ENCODE measurements at regions of chr13 and their contacts with region 1.

Region 1: GRCh38 chr13:51844862-51845573 is at the start of gene TMEM272:
- DNase-seq: peak; percentile 63
- H3K4me3 Mint-ChIP-seq: peak within 1 kb of the TSS; percentile 47
- H3K27ac Mint-ChIP-seq: no peak within 1 kb of the TSS
- H3K4me1 Mint-ChIP-seq: peaks cover 17% of the 10 kb centered on the region
- H3K27me3 Mint-ChIP-seq: peaks cover 6% of the 10 kb centered on the region
- total RNA-seq, gene TMEM272: 0.41 to 0.42 TPM

Region 2: GRCh38 chr13:51502153-51502651 is 342.8 kb before region 1 on chr13:
- CTCF ChIA-PET with region 1: no interaction called
- intact Hi-C with region 1: no loop called
- DNase-seq: peak; percentile 66
- H3K4me3 Mint-ChIP-seq: no peak overlapping the region
- H3K27ac Mint-ChIP-seq: no peak overlapping the region
- H3K4me1 Mint-ChIP-seq: peaks cover 23% of the 10 kb centered on the region
- H3K27me3 Mint-ChIP-seq: no peaks in the 10 kb centered on the region

Region 3: DNA sequence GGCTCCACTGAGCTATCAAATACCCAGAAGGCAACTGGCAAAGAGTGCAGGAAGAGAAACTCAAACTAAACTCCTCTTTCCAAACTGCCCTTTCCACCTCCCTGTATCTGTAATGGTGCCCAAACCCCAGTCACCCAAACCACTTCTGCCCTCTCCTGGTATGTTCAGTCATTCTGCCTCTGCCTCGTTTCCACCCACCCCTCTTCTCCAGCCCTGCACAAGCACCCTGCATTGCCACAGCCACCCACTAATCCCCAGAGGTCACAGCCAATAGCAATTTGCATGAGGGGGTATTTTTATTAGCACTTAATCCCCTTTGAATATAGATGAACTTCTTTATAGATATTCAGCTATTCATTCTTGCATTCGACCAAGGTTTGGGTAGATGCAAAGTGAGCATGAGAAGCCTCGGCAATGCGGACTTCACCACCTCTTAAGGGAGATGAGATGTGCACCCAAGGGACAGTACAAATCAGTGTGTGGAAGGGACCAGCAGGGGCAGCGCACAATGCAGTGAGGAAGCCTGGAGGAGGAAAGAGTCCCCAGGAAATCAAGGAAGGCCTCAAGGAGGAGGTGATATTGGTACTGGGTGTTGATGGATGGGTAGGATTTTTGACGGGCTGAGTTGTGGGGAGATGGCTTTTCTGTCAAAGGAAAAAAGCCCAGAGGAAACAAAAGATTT is 12.4 kb before region 1 on chr13:
- CTCF ChIA-PET with region 1: interaction called, 12 read pairs
- intact Hi-C with region 1: no loop called
- DNase-seq: peak; percentile 79
- H3K4me3 Mint-ChIP-seq: no peak overlapping the region
- H3K27ac Mint-ChIP-seq: peak overlapping the region; percentile 57
- H3K4me1 Mint-ChIP-seq: peaks cover 44% of the 10 kb centered on the region
- H3K27me3 Mint-ChIP-seq: no peaks in the 10 kb centered on the region

Region 4: DNA sequence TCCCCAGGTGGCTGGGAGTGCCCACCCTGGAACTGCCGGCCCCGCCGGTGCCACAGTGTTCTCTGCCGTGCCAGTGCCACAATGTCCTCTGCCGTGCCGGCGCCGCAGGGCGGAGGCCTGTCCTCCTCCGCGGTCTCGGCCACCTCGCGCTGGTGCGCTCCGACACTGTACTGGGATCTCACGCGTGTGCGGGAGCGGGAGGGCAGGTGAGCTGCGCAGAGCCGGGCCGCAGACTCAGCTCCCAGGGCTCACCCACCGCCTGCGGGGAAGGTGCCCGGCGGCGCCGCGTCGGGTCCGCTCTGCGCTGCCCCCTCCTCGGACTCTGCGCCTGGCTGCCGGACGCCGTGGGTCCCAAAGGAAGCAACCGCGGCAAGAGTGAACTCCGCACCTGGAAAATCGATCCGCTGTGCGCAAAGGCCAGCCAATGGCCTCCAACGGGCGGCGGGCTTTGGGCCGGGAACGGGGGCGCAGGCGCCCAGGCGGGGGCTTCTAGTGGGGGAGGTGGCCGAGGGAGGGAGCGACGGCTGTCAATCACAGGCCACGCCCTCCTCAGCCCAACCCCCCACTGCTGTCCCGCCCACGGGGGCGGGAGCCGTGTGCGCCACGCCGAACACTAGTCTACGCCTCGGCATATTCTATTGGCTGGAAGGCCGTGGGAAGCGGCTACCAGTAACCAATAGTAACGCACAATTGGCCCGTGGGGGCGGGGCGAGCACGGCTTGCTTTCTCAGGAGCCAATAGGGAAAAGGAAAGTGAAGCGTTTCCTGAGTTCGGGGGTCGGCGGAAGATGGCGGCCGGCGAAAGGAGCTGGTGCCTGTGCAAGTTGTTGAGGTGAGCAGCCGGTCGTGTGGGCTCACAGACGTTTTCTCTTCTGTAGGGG is 166.9 kb after region 1 on chr13 and contains the start of gene ALG11:
- CTCF ChIA-PET with region 1: no interaction called
- intact Hi-C with region 1: no loop called
- DNase-seq: peak; percentile 100
- H3K4me3 Mint-ChIP-seq: peak within 1 kb of the TSS; percentile 98
- H3K27ac Mint-ChIP-seq: peak within 1 kb of the TSS; percentile 85
- H3K4me1 Mint-ChIP-seq: peaks cover 14% of the 10 kb centered on the region
- H3K27me3 Mint-ChIP-seq: peaks cover 10% of the 10 kb centered on the region
- total RNA-seq, gene ALG11: 12.6 to 15.6 TPM